ENCODE measurements at regions of chr14 and their contacts with region 1.

Region 1: GRCh38 chr14:68137704-68138619 is 318.4 kb downstream of the RAD51B start:
- DNase-seq: peak; percentile 12
- H3K4me3 ChIP-seq: no peak overlapping the region
- H3K27ac ChIP-seq: no peak overlapping the region
- H3K4me1 ChIP-seq: peaks cover 8% of the 10 kb centered on the region
- H3K27me3 ChIP-seq: no peaks in the 10 kb centered on the region
- CTCF ChIP-seq: no peak
- POLR2A ChIP-seq: no peak

Region 2: DNA sequence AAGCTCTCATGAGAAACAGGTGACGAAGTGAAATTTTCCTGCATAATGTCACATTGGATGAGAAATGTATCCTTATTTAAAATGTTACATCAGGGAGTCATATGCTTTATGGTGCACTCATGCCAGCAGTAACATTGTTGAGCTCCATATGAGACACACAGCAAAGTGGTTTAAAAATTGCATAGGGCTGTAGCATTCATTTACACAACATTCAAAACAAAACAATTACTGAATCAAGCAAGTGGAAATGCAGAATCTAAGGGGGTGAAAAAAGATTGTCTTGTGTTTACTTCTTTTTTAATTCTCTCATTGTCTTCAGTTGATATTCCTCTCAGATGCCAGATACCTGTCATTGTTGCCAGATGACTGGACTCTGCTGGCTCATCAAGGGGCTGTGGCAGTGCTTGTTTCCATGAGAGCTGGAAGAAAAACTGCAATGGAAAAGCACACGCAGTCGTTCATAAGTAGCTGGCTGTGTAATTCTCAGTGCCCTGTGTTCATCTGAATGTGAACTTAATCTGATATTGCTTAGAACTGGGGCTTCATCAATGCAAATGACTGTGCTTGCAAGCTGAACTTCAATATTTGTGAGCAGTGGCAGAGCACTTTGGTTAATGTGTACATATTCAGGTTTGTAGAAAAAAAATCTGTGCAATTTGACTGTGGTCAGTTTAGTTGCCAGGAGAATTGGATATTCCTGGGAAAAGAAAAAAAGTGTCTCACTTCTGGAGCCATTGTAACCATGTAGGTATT is 12.8 kb before region 1 on chr14:
- CTCF ChIA-PET with region 1: interaction called, 4 read pairs
- POLR2A ChIA-PET with region 1: no interaction called
- dilution Hi-C with region 1: no loop called
- intact Hi-C with region 1: loop called (anchors 1 kb)
- DNase-seq: no peak
- H3K4me3 ChIP-seq: no peak overlapping the region
- H3K27ac ChIP-seq: no peak overlapping the region
- H3K4me1 ChIP-seq: no peaks in the 10 kb centered on the region
- H3K27me3 ChIP-seq: no peaks in the 10 kb centered on the region
- CTCF ChIP-seq: no peak
- POLR2A ChIP-seq: no peak

Region 3: GRCh38 chr14:68232300-68233055 is 94.5 kb after region 1 on chr14:
- CTCF ChIA-PET with region 1: no interaction called
- POLR2A ChIA-PET with region 1: no interaction called
- dilution Hi-C with region 1: no loop called
- intact Hi-C with region 1: loop called (anchors 5 kb)
- DNase-seq: peak; percentile 99
- H3K4me3 ChIP-seq: peak overlapping the region in 1 of 3 experiments; percentile 11
- H3K27ac ChIP-seq: peak overlapping the region; percentile 99
- H3K4me1 ChIP-seq: peaks cover 30% of the 10 kb centered on the region
- H3K27me3 ChIP-seq: no peaks in the 10 kb centered on the region
- CTCF ChIP-seq: no peak
- POLR2A ChIP-seq: peak; percentile 39

Measured in endothelial cell of umbilical vein (primary cell).